ENCODE measurements at regions of chr17 and their contacts with region 1.

Region 1: DNA sequence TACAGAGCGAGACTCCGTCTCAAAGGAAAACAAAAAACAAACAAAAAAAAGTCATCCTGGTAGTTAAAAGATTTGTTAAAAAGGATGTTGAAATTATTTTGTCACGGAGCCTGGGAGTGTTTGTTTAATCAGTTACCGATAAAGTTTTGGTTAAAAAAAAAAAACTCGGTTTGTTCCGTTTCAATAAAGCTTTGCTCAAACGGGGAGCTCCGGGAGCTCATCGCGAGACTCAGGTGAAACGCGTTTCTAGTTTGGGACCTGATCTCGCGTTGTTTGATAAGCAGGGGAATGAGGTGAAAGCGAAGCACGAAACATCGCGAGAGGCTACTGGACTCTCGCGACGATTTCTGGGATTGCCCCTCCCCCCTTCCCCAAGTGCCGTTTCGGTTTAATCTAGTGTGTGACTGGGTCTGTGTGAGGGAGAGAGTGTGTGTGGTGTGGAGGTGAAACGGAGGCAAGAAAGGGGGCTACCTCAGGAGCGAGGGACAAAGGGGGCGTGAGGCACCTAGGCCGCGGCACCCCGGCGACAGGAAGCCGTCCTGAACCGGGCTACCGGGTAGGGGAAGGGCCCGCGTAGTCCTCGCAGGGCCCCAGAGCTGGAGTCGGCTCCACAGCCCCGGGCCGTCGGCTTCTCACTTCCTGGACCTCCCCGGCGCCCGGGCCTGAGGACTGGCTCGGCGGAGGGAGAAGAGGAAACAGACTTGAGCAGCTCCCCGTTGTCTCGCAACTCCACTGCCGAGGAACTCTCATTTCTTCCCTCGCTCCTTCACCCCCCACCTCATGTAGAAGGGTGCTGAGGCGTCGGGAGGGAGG is at the start of gene CDK12:
- DNase-seq: peak; percentile 100
- ATAC-seq: peak; percentile 91
- H3K4me3 ChIP-seq: peak within 1 kb of the TSS; percentile 83
- H3K27ac ChIP-seq: peak within 1 kb of the TSS; percentile 97 to 98
- H3K4me1 ChIP-seq: peaks cover 18% of the 10 kb centered on the region; the same call in 2 of the 3 replicates
- CTCF ChIP-seq: no peak
- EP300 ChIP-seq: no peak
- POLR2A ChIP-seq: peak; percentile 93
- RAD21 ChIP-seq: no peak
- polyA plus RNA-seq, gene CDK12: 42.1 and 47.3 TPM in 2 replicates

Region 2: DNA sequence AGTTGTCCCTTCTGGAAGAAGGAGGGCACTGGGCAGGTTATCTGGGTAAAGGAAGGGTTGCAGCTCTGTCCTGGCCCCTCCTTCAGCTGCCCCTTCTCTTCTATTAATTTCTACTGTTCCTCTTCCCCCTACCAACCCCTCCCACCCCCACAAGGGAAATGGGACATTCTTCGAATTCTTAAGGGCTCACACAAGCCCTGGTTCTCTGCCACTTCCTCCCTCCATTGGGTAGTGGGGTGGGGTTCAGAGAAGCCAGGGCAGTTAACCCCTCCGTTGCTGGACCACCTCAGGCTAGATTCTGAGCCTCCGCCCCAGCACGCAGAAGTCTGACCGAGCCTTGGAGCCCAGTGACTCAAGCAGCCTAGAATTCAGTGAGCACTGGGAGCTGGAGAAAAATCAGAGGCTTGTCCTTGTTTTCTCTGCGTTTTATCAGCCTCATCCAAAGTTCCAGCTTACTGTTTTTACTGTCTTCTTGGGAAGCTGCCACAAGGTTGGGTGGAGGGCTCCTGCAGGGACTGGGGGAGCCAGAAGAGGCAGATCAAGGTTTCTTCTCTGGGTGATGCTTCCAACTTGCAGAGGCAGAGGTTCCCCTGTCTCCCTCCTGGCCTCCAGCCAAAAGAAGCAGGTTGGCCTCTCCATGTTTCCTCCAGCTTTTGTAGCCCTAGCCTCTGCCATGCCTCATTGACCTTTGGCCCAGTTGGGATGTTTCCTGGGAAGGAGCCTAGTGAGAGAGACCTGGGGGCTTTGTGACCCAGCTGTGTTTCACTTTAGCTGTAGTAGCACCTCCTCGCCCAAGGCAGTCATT is 581.2 kb before region 1 on chr17:
- CTCF ChIA-PET with region 1: no interaction called
- POLR2A ChIA-PET with region 1: interaction called, 10 read pairs
- DNase-seq: peak; percentile 87 to 95
- ATAC-seq: peak; percentile 64 to 78
- H3K4me3 ChIP-seq: peak overlapping the region; percentile 24
- H3K27ac ChIP-seq: peak overlapping the region; percentile 91 to 98
- H3K4me1 ChIP-seq: peaks cover 100% of the 10 kb centered on the region
- CTCF ChIP-seq: no peak
- EP300 ChIP-seq: peak in 1 of 2 experiments; percentile 66; a peak in 1 of 5 replicates
- POLR2A ChIP-seq: no peak
- RAD21 ChIP-seq: no peak; a peak in 1 of 5 replicates

Region 3: GRCh38 chr17:39082482-39082881 is 378.8 kb before region 1 on chr17:
- CTCF ChIA-PET with region 1: no interaction called
- POLR2A ChIA-PET with region 1: no interaction called
- DNase-seq: no peak
- ATAC-seq: no peak
- H3K4me3 ChIP-seq: no peak overlapping the region
- H3K27ac ChIP-seq: no peak overlapping the region
- H3K4me1 ChIP-seq: no peaks in the 10 kb centered on the region
- CTCF ChIP-seq: no peak
- EP300 ChIP-seq: no peak
- POLR2A ChIP-seq: no peak
- RAD21 ChIP-seq: no peak

Region 4: DNA sequence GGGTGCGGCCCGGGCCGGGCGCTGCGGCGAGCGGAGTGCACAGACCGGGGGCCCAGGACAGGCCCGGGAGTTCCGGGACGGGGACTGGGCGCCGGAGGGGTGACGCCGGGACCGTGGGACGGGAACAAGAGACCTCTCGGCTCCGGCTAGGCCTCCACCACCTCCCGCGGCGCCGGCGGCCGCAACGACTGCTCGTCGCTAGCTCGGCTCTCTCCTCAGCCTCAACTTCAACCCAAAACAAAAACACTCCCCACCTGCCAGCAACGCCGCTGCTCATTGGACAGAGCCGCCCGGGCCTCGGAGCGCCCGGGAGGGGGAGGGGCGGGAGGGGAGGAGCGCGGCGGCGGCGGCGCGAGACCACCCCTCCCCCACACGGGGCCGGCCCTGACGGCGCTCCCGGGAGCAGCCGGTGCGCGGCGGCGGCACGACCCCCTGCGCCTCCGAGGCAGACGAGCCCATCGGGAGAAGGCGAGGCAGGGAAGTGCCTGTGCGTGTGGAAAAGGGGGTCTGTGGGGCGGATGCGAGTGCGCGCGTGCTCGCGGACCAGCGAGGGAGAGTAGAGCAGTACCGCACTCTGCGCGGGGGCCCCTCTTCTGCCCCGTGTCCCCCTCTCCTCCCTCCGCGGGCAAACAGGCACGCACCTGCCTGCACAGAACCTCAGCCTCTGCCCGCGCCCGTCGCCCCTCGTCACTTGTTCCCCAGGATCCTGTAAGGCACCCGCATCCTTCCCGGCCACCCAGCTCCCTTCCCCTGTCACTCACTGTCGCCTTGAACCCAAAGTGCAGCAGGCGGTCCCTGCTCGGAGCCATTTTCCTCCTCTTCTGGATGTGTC is 59.7 kb before region 1 on chr17 and contains the start of gene FBXL20:
- CTCF ChIA-PET with region 1: interaction called, 3 read pairs
- POLR2A ChIA-PET with region 1: interaction called, 14 read pairs
- DNase-seq: peak; percentile 91 to 98
- ATAC-seq: peak; percentile 76 to 83
- H3K4me3 ChIP-seq: peak within 1 kb of the TSS; percentile 90
- H3K27ac ChIP-seq: peak within 1 kb of the TSS; percentile 84 to 95
- H3K4me1 ChIP-seq: peaks cover 45% of the 10 kb centered on the region
- CTCF ChIP-seq: no peak
- EP300 ChIP-seq: no peak; a peak in 1 of 5 replicates
- POLR2A ChIP-seq: peak; percentile 34
- RAD21 ChIP-seq: no peak
- polyA plus RNA-seq, gene FBXL20: 6.7 and 12.2 TPM in 2 replicates

Region 5: GRCh38 chr17:39450847-39451581 is 10.3 kb before region 1 on chr17 and contains the start of gene MED1:
- CTCF ChIA-PET with region 1: interaction called, 13 read pairs
- POLR2A ChIA-PET with region 1: interaction called, 133 read pairs
- DNase-seq: peak; percentile 99 to 100
- ATAC-seq: peak; percentile 98 to 99
- H3K4me3 ChIP-seq: peak within 1 kb of the TSS; percentile 72
- H3K27ac ChIP-seq: peak within 1 kb of the TSS; percentile 88 to 92
- H3K4me1 ChIP-seq: peaks cover 21% of the 10 kb centered on the region; the same call in 2 of the 3 replicates
- CTCF ChIP-seq: no peak
- EP300 ChIP-seq: no peak
- POLR2A ChIP-seq: peak; percentile 78
- RAD21 ChIP-seq: no peak
- polyA plus RNA-seq, gene MED1: 74.9 and 76.2 TPM in 2 replicates

Region 6: DNA sequence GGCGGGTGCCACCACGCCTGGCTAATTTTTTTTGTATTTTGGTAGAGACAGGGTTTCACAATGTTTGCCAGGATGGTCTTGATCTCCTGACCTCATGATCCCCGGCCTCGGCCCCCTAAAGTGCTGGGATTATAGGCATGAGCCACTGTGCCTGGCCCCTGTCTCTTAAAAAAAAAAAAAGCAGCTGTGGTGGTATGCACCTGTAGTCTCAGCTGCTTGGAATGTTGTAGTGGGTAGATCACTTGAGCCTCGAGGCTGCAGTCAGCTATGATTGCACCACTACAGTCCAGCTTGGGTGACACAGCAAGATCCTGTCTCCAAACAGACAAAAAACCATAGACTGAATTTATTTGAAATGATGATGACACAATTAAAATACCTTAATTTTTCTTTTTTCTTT is 24.2 kb after region 1 on chr17:
- CTCF ChIA-PET with region 1: no interaction called
- POLR2A ChIA-PET with region 1: interaction called, 36 read pairs
- DNase-seq: peak in 1 of 2 experiments; percentile 84
- ATAC-seq: peak; percentile 91 to 100
- H3K4me3 ChIP-seq: no peak overlapping the region
- H3K27ac ChIP-seq: peak overlapping the region; percentile 78 to 83
- H3K4me1 ChIP-seq: peaks cover 34% of the 10 kb centered on the region
- CTCF ChIP-seq: no peak
- EP300 ChIP-seq: peak in 1 of 2 experiments; percentile 18; a peak in 1 of 5 replicates
- POLR2A ChIP-seq: no peak
- RAD21 ChIP-seq: no peak

Measured in A549 (cell line).